Cardiac septum (tissue), 1 donor: ENCODE measurements at regions of chr7 and their contacts with region 1.

Region 1: DNA sequence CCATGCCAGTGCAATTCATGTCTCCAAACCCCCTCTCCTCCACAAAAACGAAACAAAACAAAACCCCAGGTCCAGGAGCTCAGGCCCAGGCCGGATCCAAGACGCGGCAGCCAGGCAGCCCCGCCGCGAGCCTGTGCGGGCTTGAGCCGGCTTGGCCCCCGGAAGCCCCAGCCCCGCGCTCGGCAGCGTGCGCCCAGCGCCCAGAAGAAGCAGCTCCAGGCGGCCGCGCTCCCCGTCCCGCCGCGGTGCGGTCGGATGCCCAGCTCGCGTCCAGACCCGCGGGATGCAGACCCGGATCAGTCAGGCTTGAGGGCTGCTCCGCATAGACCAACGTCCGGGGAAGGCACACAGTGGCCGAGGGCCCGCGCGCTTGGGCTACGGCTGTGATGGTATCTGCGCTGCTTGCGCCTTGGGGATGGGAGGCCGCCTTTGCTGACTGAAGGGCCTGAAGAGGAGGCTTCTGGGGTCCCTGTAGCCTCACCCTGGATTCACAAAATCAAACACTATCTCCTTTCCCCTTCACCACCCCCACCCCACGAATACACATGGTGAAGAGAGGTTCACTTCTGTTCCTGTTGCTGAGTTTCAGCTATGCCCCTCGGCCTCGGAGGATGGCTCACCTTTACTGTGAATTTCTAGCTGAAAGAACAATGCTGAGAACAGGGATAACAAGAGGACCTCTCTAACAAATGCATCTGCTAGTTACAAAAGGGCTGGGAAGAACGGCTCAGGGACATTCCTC is 79.9 kb upstream of the EN2 start:
- DNase-seq: no peak

Region 2: DNA sequence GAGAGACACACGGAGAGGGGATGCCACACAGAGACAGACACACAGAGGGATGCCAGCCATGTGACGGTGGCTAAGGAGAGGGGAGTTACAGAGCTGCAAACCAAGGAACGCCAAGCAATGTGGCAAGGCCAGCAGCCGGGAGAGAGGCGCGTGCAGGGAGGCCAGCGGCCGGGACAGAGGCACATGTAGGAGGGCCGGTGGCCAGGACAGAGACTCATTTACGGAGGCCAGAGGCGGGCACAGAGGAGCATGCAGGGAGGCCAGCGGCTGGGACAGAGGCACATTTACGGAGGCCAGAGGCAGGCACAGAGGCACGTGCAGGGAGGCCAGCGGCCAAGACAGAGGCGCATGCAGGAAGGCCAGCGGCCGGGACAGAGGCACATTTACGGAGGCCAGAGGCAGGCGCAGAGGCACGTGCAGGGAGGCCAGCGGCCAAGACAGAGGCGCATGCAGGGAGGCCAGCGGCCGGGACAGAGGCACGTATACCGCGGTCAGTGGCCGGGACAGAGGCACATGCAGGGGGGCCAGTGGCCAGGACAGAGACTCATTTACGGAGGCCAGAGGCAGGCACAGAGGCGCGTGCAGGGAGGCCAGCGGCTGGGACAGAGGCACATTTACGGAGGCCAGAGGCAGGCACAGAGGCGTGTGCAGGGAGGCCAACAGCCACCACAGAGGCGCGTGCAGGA is 39.9 kb before region 1 on chr7:
- intact Hi-C with region 1: no loop called
- DNase-seq: no peak

Region 3: GRCh38 chr7:155357573-155358041 is 20.4 kb before region 1 on chr7:
- intact Hi-C with region 1: no loop called
- DNase-seq: no peak

Region 4: DNA sequence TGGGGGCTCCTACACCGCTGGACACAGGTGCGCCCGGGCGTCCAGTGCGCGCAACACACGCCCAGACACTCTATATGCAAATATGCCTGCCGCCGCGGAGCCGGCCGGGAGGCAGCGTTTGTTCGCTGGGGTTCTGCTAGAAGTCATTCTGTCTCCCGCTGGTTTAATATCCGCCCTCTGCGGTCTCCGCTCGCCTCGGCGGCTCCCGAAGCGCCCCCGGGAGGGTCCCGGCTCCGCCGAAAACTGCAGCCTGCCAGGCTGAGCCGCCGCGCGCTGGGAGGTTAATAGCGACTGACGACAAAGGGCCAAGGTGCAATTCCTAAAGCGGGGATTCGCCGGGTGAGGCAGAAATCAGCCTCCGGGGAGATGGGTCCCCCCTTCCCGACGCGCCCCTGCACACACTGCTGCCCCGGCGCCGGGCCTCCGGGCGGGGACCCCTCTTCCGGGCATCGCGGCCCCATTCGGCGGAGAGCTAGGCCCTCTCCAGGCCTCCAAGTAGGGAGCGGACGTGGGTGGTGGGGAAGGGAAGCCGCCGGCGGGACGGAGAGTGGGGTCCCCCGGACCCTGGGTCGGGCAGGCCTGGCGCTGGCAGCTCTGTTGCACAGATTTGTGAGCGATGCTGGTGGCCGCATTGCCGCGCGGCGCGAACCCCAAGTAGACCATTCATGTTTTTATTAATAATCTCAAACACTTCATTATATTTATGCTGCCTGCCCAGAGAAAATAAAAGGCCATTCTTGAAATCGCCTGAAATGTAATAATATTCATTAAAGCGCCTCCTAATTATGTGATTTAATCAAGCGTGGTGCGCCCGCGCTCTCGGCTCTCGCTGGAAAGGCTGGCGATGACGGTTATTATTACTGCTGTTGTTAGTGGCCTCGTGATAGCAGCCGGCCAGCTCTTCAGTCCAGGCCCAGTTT is 89.1 kb after region 1 on chr7:
- intact Hi-C with region 1: loop called (anchors 5 kb)
- DNase-seq: no peak